ENCODE measurements at regions of chr12 and their contacts with region 1.

Region 1: GRCh38 chr12:44930972-44931600 is 55.0 kb upstream of the NELL2 start:
- DNase-seq: no peak
- ATAC-seq: peak; percentile 66
- H3K4me3 ChIP-seq: no peak overlapping the region
- H3K27ac ChIP-seq: no peak overlapping the region
- H3K4me1 ChIP-seq: no peaks in the 10 kb centered on the region
- H3K27me3 ChIP-seq: no peaks in the 10 kb centered on the region
- CTCF ChIP-seq: peak; percentile 4 to 58 (median 38); a peak in 2 of 6 replicates
- EP300 ChIP-seq: no peak
- POLR2A ChIP-seq: no peak
- RAD21 ChIP-seq: peak; percentile 83

Region 2: DNA sequence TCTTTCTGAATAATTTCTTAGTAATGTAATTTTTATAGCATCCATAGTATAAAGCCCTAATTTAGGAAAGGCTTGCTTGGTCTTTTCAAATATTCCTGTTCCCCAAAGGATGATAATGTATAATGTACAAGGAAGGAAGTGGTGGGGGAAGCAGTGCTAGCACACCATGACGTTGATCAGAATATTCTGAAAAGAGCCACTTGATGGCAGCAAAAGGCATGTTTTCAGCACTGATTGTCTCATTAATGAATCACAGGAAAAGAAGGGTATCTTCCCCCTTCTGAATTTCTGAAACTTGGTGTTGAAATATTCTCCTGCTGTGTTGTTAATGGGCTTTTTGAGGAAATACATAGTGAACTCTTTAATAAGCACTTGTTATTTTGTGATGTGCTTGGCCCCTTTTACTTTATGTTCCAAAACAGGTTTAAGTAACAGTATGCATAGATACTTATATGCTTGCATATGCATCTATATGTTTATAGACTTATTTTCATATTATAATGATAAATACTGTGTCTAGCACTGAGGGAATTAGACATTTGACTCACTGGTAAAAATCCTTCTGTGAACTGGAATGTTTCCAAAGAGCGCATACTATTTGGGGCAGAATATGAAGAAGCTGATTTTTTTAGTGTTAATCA is 973.2 kb before region 1 on chr12:
- CTCF ChIA-PET with region 1: interaction called, 20 read pairs
- POLR2A ChIA-PET with region 1: no interaction called
- RAD21 ChIA-PET with region 1: interaction called, 14 read pairs
- SMC1A ChIA-PET with region 1: interaction called, 7 read pairs
- in situ Hi-C with region 1: loop called (anchors 10 kb)
- intact Hi-C with region 1: loop called (anchors 2 kb)
- DNase-seq: peak; percentile 28
- ATAC-seq: peak; percentile 89
- H3K4me3 ChIP-seq: no peak overlapping the region
- H3K27ac ChIP-seq: no peak overlapping the region
- H3K4me1 ChIP-seq: no peaks in the 10 kb centered on the region
- H3K27me3 ChIP-seq: no peaks in the 10 kb centered on the region
- CTCF ChIP-seq: peak; percentile 33 to 79 (median 56); a peak in 5 of 6 replicates
- EP300 ChIP-seq: no peak
- POLR2A ChIP-seq: no peak
- RAD21 ChIP-seq: peak; percentile 77

Region 3: DNA sequence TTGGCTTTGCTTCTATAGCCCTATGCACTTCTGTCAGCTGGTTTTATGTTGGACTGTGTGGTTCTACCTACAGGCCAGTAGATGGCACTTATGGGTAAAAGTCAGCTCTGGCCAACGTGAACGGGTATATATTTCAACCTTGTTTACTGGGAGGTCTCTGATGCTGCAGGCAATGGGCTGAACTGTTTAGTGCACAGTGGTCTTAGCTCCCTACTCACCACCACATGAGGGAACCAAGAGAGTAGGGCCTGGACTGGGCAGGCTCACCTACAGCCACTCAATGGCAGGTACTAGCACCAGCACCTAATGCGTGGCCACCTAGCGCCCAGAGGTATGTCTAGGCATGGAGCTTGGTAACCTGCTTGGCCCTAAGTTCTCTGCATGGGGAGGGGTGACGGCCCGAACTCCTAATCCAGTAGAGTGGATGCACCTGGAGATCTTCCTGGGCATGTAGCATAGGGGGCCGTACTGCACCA is 613.4 kb before region 1 on chr12:
- CTCF ChIA-PET with region 1: interaction called, 4 read pairs
- POLR2A ChIA-PET with region 1: no interaction called
- RAD21 ChIA-PET with region 1: no interaction called
- SMC1A ChIA-PET with region 1: interaction called, 8 read pairs
- in situ Hi-C with region 1: no loop called
- intact Hi-C with region 1: loop called (anchors 5 kb)
- DNase-seq: no peak
- ATAC-seq: peak; percentile 93
- H3K4me3 ChIP-seq: no peak overlapping the region
- H3K27ac ChIP-seq: no peak overlapping the region
- H3K4me1 ChIP-seq: no peaks in the 10 kb centered on the region
- H3K27me3 ChIP-seq: no peaks in the 10 kb centered on the region
- CTCF ChIP-seq: peak; percentile 51 to 57 (median 55); a peak in 5 of 6 replicates
- EP300 ChIP-seq: no peak
- POLR2A ChIP-seq: no peak
- RAD21 ChIP-seq: peak; percentile 89

Region 4: GRCh38 chr12:44774815-44775411 is 156.2 kb before region 1 on chr12:
- CTCF ChIA-PET with region 1: interaction called, 24 read pairs
- POLR2A ChIA-PET with region 1: no interaction called
- RAD21 ChIA-PET with region 1: interaction called, 14 read pairs
- SMC1A ChIA-PET with region 1: interaction called, 8 read pairs
- in situ Hi-C with region 1: loop called (anchors 10 kb)
- intact Hi-C with region 1: loop called (anchors 1 kb)
- DNase-seq: no peak
- ATAC-seq: peak; percentile 63
- H3K4me3 ChIP-seq: no peak overlapping the region
- H3K27ac ChIP-seq: no peak overlapping the region
- H3K4me1 ChIP-seq: no peaks in the 10 kb centered on the region
- H3K27me3 ChIP-seq: no peaks in the 10 kb centered on the region
- CTCF ChIP-seq: peak; percentile 66 to 85 (median 82)
- EP300 ChIP-seq: no peak
- POLR2A ChIP-seq: no peak
- RAD21 ChIP-seq: peak; percentile 61

Region 5: GRCh38 chr12:44812062-44812461 is 119.0 kb before region 1 on chr12:
- CTCF ChIA-PET with region 1: interaction called, 29 read pairs
- POLR2A ChIA-PET with region 1: no interaction called
- RAD21 ChIA-PET with region 1: interaction called, 8 read pairs
- SMC1A ChIA-PET with region 1: interaction called, 10 read pairs
- in situ Hi-C with region 1: no loop called
- intact Hi-C with region 1: loop called (anchors 5 kb)
- DNase-seq: no peak
- ATAC-seq: peak; percentile 74
- H3K4me3 ChIP-seq: no peak overlapping the region
- H3K27ac ChIP-seq: no peak overlapping the region
- H3K4me1 ChIP-seq: no peaks in the 10 kb centered on the region
- H3K27me3 ChIP-seq: no peaks in the 10 kb centered on the region
- CTCF ChIP-seq: peak in 2 of 3 experiments; percentile 36 to 37; a peak in 3 of 6 replicates
- EP300 ChIP-seq: no peak
- POLR2A ChIP-seq: no peak
- RAD21 ChIP-seq: peak; percentile 58

Region 6: DNA sequence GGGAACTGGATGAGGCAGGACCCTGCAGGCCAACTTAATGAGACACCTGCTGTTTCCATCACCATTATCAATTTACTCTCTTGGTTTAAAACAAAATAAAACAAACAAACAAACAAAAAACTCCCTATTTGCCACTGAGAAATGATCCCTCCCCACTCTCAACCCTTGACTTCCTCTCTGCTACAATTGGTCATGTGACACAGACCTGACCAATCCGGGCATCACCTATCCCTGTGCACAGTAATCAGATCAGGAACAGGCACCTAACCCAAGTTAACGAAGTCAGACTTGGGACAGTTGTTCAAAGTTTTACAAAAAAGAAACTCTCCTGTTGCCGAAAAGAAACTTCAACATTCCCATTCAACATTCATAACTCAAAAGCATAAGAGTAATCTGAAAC is 113.4 kb before region 1 on chr12:
- CTCF ChIA-PET with region 1: interaction called, 29 read pairs
- POLR2A ChIA-PET with region 1: no interaction called
- RAD21 ChIA-PET with region 1: interaction called, 8 read pairs
- SMC1A ChIA-PET with region 1: interaction called, 10 read pairs
- in situ Hi-C with region 1: no loop called
- intact Hi-C with region 1: loop called (anchors 5 kb)
- DNase-seq: no peak
- ATAC-seq: peak; percentile 42; the same call in 1 of the 3 replicates
- H3K4me3 ChIP-seq: no peak overlapping the region
- H3K27ac ChIP-seq: no peak overlapping the region
- H3K4me1 ChIP-seq: no peaks in the 10 kb centered on the region
- H3K27me3 ChIP-seq: no peaks in the 10 kb centered on the region
- CTCF ChIP-seq: no peak
- EP300 ChIP-seq: no peak
- POLR2A ChIP-seq: no peak
- RAD21 ChIP-seq: no peak

Region 7: DNA sequence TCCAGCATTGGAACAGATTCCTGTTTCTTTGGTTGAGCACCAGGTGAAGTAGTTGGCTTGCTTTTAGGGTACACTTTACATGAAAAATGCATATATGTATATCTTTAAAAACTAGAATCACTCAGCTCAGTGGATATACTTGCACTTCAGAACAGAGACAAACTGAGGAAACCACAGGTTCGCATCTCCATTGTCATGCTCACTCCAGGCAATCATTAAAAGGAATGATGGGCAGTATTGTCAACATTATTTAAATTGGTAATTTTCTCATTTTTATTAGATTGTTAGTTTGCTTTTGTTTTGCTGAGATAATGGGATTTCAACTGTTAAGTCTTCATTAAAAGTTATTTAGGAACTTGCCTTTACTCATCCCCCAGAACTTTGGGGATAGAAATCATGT is 16.1 kb after region 1 on chr12:
- CTCF ChIA-PET with region 1: interaction called, 15 read pairs
- POLR2A ChIA-PET with region 1: no interaction called
- RAD21 ChIA-PET with region 1: interaction called, 3 read pairs
- SMC1A ChIA-PET with region 1: interaction called, 3 read pairs
- in situ Hi-C with region 1: no loop called
- intact Hi-C with region 1: no loop called
- DNase-seq: no peak
- ATAC-seq: no peak
- H3K4me3 ChIP-seq: no peak overlapping the region
- H3K27ac ChIP-seq: no peak overlapping the region
- H3K4me1 ChIP-seq: no peaks in the 10 kb centered on the region
- H3K27me3 ChIP-seq: no peaks in the 10 kb centered on the region
- CTCF ChIP-seq: no peak
- EP300 ChIP-seq: no peak
- POLR2A ChIP-seq: no peak
- RAD21 ChIP-seq: no peak

Measured in GM12878 (cell line).